ENCODE measurements at regions of chr9 and their contacts with region 1.

Region 1: DNA sequence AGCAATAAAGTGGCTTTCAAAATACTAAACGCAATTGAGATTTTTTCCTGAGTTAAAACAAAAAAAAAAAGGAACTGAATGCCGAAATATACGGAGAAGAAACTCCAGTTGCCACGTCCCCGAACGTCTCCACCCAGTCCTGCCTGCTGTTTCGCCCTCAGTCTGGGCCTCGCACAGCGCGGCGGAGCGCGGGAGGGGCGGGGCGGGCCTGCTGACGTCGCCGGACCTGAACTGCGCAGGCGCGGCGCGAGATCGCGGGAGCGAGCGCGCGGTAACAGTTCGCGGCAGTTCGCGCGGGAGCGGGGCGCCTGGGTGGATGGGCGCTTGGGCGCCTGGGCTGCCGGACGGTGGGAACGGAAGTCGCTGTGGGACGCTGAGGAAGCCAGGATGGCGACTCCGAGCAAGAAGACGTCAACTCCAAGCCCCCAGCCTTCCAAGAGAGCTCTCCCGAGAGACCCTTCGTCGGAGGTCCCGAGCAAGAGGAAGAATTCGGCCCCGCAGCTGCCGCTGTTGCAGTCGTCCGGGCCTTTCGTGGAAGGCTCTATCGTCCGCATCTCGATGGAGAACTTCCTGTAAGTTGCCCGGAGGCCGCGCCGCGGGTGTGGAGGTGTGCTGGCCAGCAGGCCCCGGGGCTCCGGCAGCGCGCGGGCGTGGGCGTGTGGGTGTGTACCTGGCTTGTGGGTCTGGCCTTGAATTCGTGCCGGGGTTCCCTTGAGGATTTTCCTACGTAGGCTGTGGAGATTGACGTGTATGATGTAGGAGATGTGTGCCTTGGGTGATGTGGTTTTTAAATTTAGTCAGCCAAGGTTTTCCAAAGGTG is at the start of gene SMC5:
- DNase-seq: peak; percentile 91 to 95 (median 92)
- ATAC-seq: peak; percentile 92 to 97 (median 95)
- H3K4me3 ChIP-seq: peak within 1 kb of the TSS; percentile 70 to 97 (median 85)
- H3K27ac ChIP-seq: peak within 1 kb of the TSS; percentile 86 to 97 (median 94)
- H3K4me1 ChIP-seq: peaks cover 5 to 58% (median 48%) of the 10 kb centered on the region in 12 donors
- H3K27me3 ChIP-seq: no peaks in the 10 kb centered on the region
- CTCF ChIP-seq: peak in 1 of 12 donors; percentile 9
- POLR2A ChIP-seq: peak; percentile 85 to 95
- total RNA-seq, gene SMC5: 8.4 to 14.6 (median 11.4) TPM

Region 2: DNA sequence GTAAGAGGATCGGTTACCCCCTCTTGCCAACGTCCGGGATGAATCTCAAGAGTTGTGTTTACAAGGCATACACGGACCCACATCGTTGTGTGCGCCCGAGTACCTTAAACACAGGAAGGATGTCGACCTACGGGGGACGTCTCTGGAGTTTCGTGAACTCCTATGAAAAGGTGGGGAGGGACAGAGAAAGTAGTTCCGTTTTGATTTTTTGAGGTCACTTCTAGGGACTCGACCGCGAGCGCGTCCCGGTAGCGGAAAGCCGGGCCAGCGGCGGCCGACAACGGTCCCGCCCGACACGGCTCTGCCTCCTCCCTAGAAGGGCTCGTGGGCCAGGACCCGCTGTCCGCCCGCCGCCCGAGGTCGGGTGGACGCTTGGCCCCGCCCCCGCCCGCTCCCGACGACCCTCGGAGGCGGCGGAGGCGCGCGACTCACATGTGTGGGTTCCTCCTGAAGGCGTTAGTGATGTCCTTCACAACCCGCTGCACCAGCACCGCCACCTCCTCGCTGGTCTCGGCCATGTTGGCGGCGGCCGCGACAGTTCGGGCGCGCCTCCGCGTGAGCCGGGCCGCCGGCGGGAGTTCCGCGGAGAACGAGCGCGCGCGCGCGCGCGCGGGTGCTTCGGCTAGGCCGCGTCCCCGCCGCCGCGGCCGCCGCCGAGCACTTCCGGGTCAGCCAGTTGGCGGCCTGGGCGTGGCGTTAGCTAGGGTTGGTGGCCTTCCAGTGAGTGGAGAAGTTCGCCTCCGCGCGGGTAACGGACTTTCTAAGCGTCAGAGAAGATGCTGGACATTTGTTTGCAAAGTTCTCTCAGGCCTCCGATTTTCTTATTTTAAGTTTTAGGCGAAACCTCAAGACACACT is 499.3 kb before region 1 on chr9 and contains the start of gene PTAR1:
- intact Hi-C with region 1: loop called in 1 of 10 experiments (anchors 10 kb)
- DNase-seq: peak; percentile 93 to 96 (median 94)
- ATAC-seq: peak; percentile 91 to 99 (median 97)
- H3K4me3 ChIP-seq: peak within 1 kb of the TSS; percentile 76 to 98 (median 90)
- H3K27ac ChIP-seq: peak within 1 kb of the TSS; percentile 93 to 98 (median 98)
- H3K4me1 ChIP-seq: peaks cover 3 to 35% (median 19%) of the 10 kb centered on the region in 12 donors
- H3K27me3 ChIP-seq: no peaks in the 10 kb centered on the region
- CTCF ChIP-seq: peak in 1 of 12 donors; percentile 6
- POLR2A ChIP-seq: peak in 1 of 2 donors; percentile 53
- total RNA-seq, gene PTAR1: 18.4 to 37.4 (median 25.8) TPM

Region 3: DNA sequence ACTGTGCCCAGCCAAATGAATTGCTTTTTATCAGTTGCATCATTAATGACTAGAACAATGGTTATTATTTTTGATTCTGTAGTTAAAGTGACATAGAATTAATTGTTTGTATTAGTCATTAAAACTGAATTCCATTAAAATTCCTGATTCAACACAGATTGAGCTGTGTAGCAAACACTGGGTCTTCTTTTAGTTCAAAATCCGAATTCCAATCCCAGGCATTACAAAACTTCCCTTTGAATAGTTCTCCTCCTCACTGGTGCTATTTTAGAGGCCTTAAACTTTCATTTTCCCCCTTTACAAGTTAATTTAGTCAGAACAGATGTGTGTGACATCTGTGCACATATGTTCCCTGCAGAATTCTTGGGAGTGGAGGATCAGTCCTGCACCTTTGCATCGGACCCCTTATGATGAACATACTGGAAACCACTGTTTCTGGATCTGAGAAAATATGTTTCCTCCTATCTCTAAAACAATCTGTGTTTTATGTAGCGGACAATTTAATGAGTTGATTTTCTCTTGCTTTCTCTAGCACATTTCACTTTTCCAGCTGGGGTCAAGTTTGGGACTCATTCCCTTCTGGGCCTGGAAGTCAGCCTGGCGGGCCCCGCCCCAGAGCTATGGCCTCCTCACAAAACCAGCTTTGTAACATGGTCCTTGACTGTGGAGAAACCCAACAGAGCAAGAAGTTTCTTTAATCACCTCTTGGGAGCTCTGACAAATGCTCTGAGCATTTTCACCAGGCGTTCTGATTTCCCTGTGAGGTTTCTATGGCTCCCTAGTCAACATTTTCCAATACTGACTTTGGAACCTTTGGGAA is 303.2 kb before region 1 on chr9:
- intact Hi-C with region 1: no loop called
- DNase-seq: no peak
- ATAC-seq: peak; percentile 37 to 60 (median 55)
- H3K4me3 ChIP-seq: no peak overlapping the region
- H3K27ac ChIP-seq: peak overlapping the region in 1 of 12 donors; percentile 32
- H3K4me1 ChIP-seq: no peaks in the 10 kb centered on the region
- H3K27me3 ChIP-seq: peaks cover 0 to 3% (median 0%) of the 10 kb centered on the region in 9 donors
- CTCF ChIP-seq: no peak
- POLR2A ChIP-seq: no peak

Region 4: GRCh38 chr9:69971643-69972449 is 287.1 kb before region 1 on chr9:
- intact Hi-C with region 1: loop called in 1 of 10 experiments (anchors 10 kb)
- DNase-seq: peak; percentile 54 to 82 (median 71)
- ATAC-seq: peak; percentile 50 to 86 (median 76)
- H3K4me3 ChIP-seq: no peak overlapping the region
- H3K27ac ChIP-seq: no peak overlapping the region
- H3K4me1 ChIP-seq: peaks cover 0 to 10% (median 4%) of the 10 kb centered on the region in 12 donors
- H3K27me3 ChIP-seq: no peaks in the 10 kb centered on the region
- CTCF ChIP-seq: peak; percentile 67 to 94 (median 84)
- POLR2A ChIP-seq: no peak

Region 5: DNA sequence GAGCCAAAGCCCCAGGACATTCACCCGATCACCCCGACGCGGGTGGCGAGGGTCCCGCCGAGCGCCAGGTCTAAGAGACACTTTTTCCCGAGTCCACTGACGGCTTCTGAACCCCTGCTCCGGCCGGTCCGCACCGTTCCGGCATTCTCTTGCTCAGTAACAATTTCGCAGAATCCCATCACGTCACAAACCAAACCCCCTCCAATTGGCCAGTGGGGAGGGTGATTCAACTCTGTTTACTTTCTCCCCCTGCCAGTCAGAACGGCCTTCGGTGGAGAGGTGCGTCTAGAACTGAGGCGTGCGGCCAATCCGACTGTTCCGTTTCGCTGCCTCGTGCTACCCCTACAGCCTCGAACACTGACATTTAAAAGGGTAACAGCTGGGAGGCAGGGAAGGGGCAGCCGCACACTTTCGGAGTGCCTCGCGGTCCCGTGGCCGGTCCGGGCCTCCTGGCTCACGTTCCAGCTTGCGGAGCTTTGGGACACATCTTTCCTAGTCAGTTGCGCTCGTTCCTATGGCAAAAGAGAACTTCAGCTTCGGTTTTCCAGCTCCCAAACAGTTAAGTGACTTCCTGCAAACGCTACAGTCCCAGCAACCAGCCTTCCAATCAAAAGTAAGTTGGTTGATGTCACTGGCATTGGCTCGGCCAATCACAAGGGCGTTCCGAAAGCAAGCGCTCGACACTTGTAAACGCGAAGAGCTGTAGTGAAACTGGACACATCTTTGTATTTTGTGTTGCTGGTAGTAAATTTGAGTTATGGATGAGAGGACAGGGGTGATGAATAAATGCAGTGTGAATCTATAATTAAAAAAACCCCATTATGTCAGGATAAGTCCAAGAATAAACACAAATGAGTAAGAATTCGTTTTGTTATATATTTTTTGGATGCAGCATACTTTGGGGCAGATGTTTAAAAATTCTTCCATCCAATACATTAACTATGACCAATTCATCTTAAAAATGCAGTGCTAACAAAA is 155.2 kb after region 1 on chr9 and contains the start of gene KLF9:
- intact Hi-C with region 1: loop called in 2 of 10 experiments (anchors 10 kb)
- DNase-seq: peak; percentile 93 to 97 (median 95)
- ATAC-seq: peak; percentile 77 to 82 (median 80)
- H3K4me3 ChIP-seq: peak within 1 kb of the TSS; percentile 76 to 99 (median 90)
- H3K27ac ChIP-seq: peak within 1 kb of the TSS; percentile 98 to 100 (median 100)
- H3K4me1 ChIP-seq: peaks cover 10 to 64% (median 53%) of the 10 kb centered on the region in 12 donors
- H3K27me3 ChIP-seq: no peaks in the 10 kb centered on the region
- CTCF ChIP-seq: no peak
- POLR2A ChIP-seq: peak; percentile 48 to 97
- total RNA-seq, gene KLF9: 28.7 to 74.8 (median 46.0) TPM

Measured in heart left ventricle (tissue), 16 donors.